HEK293T (cell line): ENCODE measurements at regions of chr6 and their contacts with region 1.

Region 1: DNA sequence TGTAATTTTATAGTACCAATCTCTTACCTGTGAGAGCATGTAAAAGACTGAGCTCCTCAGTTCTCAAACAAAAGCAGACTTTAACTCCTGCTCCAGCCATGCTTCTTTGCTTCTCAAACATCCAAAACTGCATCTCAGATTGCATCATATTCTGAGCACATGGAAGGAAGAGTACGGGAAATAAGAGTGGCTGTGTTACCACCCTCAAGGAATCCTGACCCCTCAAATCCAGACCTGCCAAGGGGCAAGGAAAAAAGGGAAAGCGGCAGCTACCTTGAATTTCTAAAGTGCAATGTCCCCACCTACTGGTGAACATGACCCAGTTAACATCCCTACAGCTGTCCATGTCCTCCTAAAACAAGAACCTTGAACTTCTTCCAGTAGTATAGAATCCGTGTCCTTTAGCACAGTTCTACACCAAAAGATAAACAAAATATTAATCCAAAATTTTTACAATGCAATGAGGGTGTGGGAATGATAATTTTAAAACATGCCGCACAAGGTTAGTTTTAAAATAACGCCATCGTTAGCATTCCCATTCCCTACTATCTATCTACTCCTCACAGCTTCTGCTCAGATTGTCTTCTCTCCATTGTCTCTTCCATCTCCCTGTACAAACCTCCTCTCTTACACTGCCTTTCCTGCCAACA is 34.1 kb upstream of the HLA-DQB1 start:
- DNase-seq: peak; percentile 61

Region 2: GRCh38 chr6:32413427-32414047 is 287.0 kb before region 1 on chr6:
- CTCF ChIA-PET with region 1: interaction called, 20 read pairs
- POLR2A ChIA-PET with region 1: no interaction called
- DNase-seq: peak; percentile 77

Region 3: DNA sequence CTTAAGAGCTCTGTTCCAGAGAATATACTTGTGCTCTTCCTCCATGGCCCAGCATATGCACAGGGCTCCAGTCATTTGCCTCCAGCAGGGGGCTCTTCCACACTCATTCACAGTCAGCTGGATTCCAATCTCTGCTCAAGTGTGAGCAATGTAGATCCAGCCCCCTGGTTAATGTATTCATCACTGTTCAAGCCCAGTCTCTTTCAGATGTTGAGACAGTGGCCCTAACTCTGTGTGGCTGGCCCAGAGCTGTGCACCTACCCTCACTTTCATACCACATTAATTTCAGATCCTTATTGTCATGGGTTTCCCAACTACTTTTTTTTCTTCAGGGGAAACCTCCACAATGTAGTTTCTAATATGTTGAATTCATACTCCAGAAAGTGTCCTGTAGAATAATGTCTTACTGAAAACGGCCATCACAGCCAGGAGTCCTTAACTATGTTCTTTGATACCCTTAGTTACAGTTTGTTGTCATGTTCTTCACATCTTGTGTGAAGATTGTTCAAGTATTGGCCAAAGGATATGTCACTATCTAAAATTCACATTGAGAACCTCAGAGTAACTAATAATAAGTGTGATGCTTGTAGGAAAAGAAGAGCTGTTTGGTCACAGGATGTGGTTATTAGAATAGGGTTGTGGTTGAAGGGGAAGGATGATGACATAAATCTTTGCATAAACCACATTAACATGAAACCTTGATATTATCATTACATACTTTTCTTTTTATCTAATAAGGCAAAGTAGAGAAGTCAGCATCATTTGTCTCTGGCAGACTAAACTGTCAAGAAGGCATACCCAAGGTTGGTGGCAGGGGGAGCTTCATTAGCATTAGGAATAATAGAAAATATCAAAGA is 77.7 kb before region 1 on chr6:
- CTCF ChIA-PET with region 1: interaction called, 10 read pairs
- POLR2A ChIA-PET with region 1: no interaction called
- DNase-seq: peak; percentile 70

Region 4: GRCh38 chr6:32666420-32667300 is 33.9 kb before region 1 on chr6 and contains the start of gene HLA-DQB1:
- CTCF ChIA-PET with region 1: no interaction called
- POLR2A ChIA-PET with region 1: no interaction called
- DNase-seq: peak; percentile 83

Region 5: GRCh38 chr6:32738126-32738525 is 37.6 kb after region 1 on chr6:
- CTCF ChIA-PET with region 1: no interaction called
- POLR2A ChIA-PET with region 1: no interaction called
- DNase-seq: no peak